Activated CD4-positive, alpha-beta memory T cell treated with anti-CD3 and anti-CD28 coated beads, Interleukin-2, amount 10 ng/mL, durations not matched to agents 7 days and 5 days (primary cell): ENCODE measurements at regions of chr3 and their contacts with region 1.

Region 1: DNA sequence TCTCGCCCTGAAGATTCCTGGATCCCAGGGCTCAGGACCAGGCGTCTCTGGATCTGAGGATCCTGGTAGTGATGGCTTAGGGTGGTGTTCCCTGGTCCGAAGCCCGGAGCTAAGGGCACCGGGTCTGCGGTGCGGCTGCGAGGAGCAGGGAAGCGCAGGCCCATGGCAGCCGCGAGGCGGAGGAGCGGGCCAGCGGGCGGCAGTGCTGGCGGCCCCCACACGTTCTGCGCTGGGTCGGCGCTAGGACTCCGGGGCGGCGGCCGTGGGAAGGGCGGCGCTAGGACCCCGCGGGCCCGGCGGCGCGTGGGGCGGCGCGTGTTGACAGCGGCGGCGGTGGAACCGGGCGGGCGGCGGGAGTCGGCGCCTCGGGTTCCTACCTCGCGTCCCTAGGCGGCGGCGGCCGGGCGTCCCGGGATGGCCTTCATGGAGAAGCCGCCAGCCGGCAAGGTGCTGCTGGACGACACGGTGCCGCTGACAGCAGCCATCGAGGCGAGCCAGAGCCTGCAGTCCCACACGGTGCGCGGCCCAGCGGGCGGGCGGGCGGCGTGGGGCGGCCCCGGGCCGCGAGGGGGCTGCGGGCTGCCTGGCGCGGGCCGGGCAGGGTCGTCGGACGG is at the start of gene PXK:
- DNase-seq: peak; percentile 84
- H3K4me3 Mint-ChIP-seq: peak within 1 kb of the TSS; percentile 100
- H3K27ac Mint-ChIP-seq: peak within 1 kb of the TSS; percentile 98
- H3K4me1 Mint-ChIP-seq: peaks cover 40% of the 10 kb centered on the region
- H3K27me3 Mint-ChIP-seq: no peaks in the 10 kb centered on the region
- total RNA-seq, gene PXK: 50.7 to 51.2 TPM

Region 2: DNA sequence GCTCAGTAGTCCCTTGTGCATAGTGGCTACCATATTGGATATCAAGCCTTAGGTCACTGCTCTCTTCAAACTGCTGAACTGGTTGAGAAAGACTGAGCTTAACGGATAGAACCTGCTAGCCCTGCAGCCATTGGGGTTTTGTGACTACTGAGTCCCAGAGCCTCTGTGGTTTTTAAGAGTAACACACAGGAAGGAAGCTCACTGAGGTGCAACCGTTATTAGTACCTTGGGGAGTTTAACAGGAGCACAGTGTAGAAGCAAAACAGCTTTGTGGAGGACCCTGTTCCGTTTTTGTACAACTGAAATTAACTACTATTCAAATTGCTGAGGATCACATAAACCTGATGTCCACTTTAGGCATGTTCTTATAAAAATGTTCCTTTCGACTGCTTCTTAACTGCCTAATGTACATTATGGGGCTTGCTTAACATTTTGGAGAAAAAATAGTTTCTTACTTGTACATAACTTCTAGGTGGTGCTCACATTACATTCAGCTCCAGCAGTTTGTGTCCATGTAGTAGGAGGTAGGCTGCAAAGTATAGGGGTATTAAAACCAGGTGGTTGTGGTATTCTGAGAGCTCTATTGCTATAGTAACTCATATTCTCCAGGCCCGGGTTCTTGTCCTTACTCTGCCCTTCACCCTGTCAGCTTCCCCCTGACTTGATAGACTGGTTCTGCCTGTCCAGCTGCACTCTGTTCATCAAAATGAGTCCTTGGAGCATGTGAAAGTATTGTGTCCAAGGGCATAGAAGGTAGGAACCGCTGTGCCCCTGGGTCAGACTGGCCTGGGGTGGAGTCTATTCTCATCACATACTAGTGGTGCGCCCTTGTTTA is 17.3 kb after region 1 on chr3:
- CTCF ChIA-PET with region 1: interaction called, 76 read pairs
- POLR2A ChIA-PET with region 1: interaction called, 35 read pairs
- DNase-seq: peak; percentile 46
- H3K4me3 Mint-ChIP-seq: no peak overlapping the region
- H3K27ac Mint-ChIP-seq: peak overlapping the region; percentile 83
- H3K4me1 Mint-ChIP-seq: peaks cover 83% of the 10 kb centered on the region
- H3K27me3 Mint-ChIP-seq: no peaks in the 10 kb centered on the region